Left ventricle myocardium superior (tissue), 1 donor: ENCODE measurements at regions of chr11 and their contacts with region 1.

Region 1: GRCh38 chr11:61679893-61680621 is at the start of gene DAGLA:
- DNase-seq: peak; percentile 85
- ATAC-seq: peak; percentile 87
- total RNA-seq, gene DAGLA: 5.5 TPM

Region 2: GRCh38 chr11:61733120-61733978 is 53.3 kb after region 1 on chr11:
- intact Hi-C with region 1: loop called (anchors 10 kb)
- DNase-seq: peak; percentile 93
- ATAC-seq: peak; percentile 89